CD4-positive, alpha-beta T cell (primary cell): ENCODE measurements at regions of chr2 and their contacts with region 1.

Region 1: DNA sequence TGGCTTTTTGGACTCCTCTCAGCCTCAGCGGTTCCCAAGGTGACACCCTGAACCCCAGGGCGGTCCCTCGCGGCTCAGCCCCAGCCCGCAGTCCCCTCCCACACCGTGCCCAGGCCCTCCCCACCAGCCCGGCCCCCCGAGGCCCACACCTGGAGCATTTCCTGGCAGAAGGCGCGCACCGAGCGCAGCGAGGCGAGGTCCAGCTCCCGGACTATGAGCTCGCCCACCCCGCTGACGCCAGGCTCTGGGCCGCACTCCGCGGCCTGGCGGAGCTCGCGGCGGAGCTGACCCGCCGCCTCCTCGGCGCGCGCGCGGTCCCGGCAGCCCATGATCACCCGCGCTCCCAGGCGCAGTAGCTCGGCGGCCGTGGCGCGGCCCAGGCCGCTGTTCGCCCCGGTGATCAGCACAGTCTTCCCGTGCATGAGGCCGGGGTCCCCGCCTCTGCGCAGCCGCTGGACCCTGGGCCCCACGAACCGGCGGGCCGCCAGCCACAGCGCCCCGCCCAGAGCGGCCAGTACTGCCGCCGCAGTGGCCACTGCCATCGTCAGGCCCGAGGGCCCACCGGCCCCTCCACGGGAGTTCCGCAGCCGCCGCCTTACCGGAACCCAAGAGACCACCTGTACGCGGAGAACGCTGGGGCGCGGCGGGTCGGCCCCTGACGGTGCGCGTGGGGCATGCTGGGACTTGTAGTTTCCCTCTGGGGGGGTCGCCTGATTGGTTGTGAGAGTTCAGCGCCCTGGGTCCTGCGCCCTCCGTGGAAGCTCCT is at the start of gene RDH14:
- DNase-seq: peak; percentile 84 to 95 (median 91)
- ATAC-seq: peak; percentile 89
- H3K4me3 ChIP-seq: peak within 1 kb of the TSS; percentile 55
- H3K4me3 Mint-ChIP-seq: peak within 1 kb of the TSS; percentile 97
- H3K27ac ChIP-seq: peak within 1 kb of the TSS; percentile 79 to 88
- H3K27ac Mint-ChIP-seq: peak within 1 kb of the TSS; percentile 93
- H3K4me1 ChIP-seq: peaks cover 13% of the 10 kb centered on the region
- H3K4me1 Mint-ChIP-seq: peaks cover 57% of the 10 kb centered on the region
- H3K27me3 ChIP-seq: no peaks in the 10 kb centered on the region
- H3K27me3 Mint-ChIP-seq: no peaks in the 10 kb centered on the region
- CTCF ChIP-seq: no peak
- total RNA-seq, gene RDH14: 11.4 to 12.7 TPM

Region 2: DNA sequence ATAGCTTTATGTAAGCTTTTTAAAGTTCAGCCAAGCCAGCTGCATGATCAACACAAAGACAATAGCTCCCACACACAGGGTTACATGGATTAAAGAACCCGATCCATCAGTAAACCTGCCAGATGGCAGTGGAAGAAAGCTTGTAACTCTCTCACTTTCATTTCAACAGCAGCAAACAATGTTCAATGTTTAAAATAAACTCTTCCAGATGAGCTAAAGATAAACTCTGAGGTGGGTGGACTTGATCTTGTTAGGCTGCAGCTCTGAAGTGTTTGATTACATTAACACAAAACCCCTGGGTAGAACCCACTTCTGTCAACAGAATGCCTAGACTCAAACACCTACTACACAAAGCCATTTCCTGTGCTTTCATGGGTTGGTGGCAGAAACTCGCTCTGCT is 13.6 kb before region 1 on chr2:
- CTCF ChIA-PET with region 1: no interaction called
- POLR2A ChIA-PET with region 1: interaction called, 15 read pairs
- intact Hi-C with region 1: no loop called
- DNase-seq: peak in 2 of 14 experiments; percentile 5 to 22
- ATAC-seq: no peak
- H3K4me3 ChIP-seq: no peak overlapping the region
- H3K4me3 Mint-ChIP-seq: peak overlapping the region; percentile 25
- H3K27ac ChIP-seq: no peak overlapping the region
- H3K27ac Mint-ChIP-seq: peak overlapping the region; percentile 68
- H3K4me1 ChIP-seq: no peaks in the 10 kb centered on the region
- H3K4me1 Mint-ChIP-seq: peaks cover 54% of the 10 kb centered on the region
- H3K27me3 ChIP-seq: no peaks in the 10 kb centered on the region
- H3K27me3 Mint-ChIP-seq: no peaks in the 10 kb centered on the region
- CTCF ChIP-seq: no peak

Region 3: GRCh38 chr2:19989681-19990415 is 1429.6 kb after region 1 on chr2 and contains the start of gene WDR35:
- CTCF ChIA-PET with region 1: no interaction called
- POLR2A ChIA-PET with region 1: interaction called, 5 read pairs
- intact Hi-C with region 1: loop called in 1 of 2 experiments (anchors 2 kb)
- DNase-seq: peak; percentile 76 to 93 (median 87)
- ATAC-seq: peak; percentile 91
- H3K4me3 ChIP-seq: peak within 1 kb of the TSS; percentile 90
- H3K4me3 Mint-ChIP-seq: peak within 1 kb of the TSS; percentile 93
- H3K27ac ChIP-seq: peak within 1 kb of the TSS; percentile 65 to 71
- H3K27ac Mint-ChIP-seq: peak within 1 kb of the TSS; percentile 82
- H3K4me1 ChIP-seq: peaks cover 14% of the 10 kb centered on the region
- H3K4me1 Mint-ChIP-seq: peaks cover 20% of the 10 kb centered on the region
- H3K27me3 ChIP-seq: peaks cover 0 to 11% of the 10 kb centered on the region in 2 experiments
- H3K27me3 Mint-ChIP-seq: peaks cover 23% of the 10 kb centered on the region
- CTCF ChIP-seq: no peak
- total RNA-seq, gene WDR35: 2.8 to 3.2 TPM

Region 4: DNA sequence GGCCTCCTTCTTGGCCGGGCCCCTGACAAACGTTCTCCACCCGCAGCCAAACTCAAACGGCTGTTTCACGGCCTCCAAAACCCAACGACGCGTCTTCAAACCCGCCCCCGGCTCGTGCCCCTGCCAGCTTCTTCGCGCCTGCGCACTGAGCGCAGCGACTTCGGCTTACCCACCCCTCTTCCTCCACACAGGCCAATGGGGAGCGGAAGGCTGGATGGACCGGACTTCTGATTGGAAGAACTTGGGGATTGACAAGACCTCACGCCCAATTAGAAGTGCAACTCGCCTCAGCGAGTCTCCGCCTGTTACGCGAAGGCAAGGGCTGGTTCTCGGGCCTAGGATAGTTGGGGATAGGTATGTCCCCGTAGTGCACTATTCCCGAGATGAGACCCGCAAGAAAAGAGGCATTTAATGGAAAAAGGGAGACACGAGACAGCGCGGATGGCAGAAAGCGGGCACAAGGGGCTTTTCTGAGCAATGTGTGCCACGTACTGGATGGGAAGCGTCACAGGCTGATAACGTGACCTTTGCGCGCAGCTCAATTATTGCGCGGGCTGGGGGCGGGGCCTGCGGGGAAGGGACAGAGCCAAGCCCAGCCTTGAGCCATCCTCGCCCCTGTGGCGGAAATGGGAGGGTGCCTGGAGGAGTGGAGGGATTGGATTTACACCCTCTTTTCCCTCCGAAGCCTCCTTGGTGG is 1491.5 kb after region 1 on chr2 and contains the start of gene LAPTM4A:
- CTCF ChIA-PET with region 1: no interaction called
- POLR2A ChIA-PET with region 1: interaction called, 13 read pairs
- intact Hi-C with region 1: loop called (anchors 5 to 10 kb)
- DNase-seq: peak; percentile 93 to 100 (median 96)
- ATAC-seq: peak; percentile 90
- H3K4me3 ChIP-seq: peak within 1 kb of the TSS; percentile 87
- H3K4me3 Mint-ChIP-seq: no peak within 1 kb of the TSS
- H3K27ac ChIP-seq: peak within 1 kb of the TSS; percentile 94 to 99
- H3K27ac Mint-ChIP-seq: no peak within 1 kb of the TSS
- H3K4me1 ChIP-seq: peaks cover 28% of the 10 kb centered on the region
- H3K4me1 Mint-ChIP-seq: peaks cover 29% of the 10 kb centered on the region
- H3K27me3 ChIP-seq: peaks cover 6 to 9% of the 10 kb centered on the region in 2 experiments
- H3K27me3 Mint-ChIP-seq: peaks cover 25% of the 10 kb centered on the region
- CTCF ChIP-seq: no peak
- total RNA-seq, gene LAPTM4A: 59.4 to 62.0 TPM

Region 5: GRCh38 chr2:20446917-20447436 is 1886.8 kb after region 1 on chr2 and contains the start of gene RHOB:
- CTCF ChIA-PET with region 1: no interaction called
- POLR2A ChIA-PET with region 1: interaction called, 6 read pairs
- intact Hi-C with region 1: loop called in 1 of 2 experiments (anchors 10 kb)
- DNase-seq: peak; percentile 62 to 97 (median 81)
- ATAC-seq: peak; percentile 96
- H3K4me3 ChIP-seq: peak within 1 kb of the TSS; percentile 65
- H3K4me3 Mint-ChIP-seq: peak within 1 kb of the TSS; percentile 86
- H3K27ac ChIP-seq: no peak within 1 kb of the TSS
- H3K27ac Mint-ChIP-seq: no peak within 1 kb of the TSS
- H3K4me1 ChIP-seq: peaks cover 16% of the 10 kb centered on the region
- H3K4me1 Mint-ChIP-seq: no peaks in the 10 kb centered on the region
- H3K27me3 ChIP-seq: peaks cover 10 to 22% of the 10 kb centered on the region in 2 experiments
- H3K27me3 Mint-ChIP-seq: peaks cover 31% of the 10 kb centered on the region
- CTCF ChIP-seq: no peak
- total RNA-seq, gene RHOB: 25.9 to 26.6 TPM